ENCODE measurements at regions of chr20 and their contacts with region 1.

Region 1: GRCh38 chr20:17504898-17505635 is 26.1 kb downstream of the BFSP1 start:
- DNase-seq: peak; percentile 57 to 74 (median 69)
- H3K4me3 ChIP-seq: peak overlapping the region; percentile 55 to 63
- H3K4me3 Mint-ChIP-seq: peak overlapping the region; percentile 89 to 97 (median 92)
- H3K27ac ChIP-seq: peak overlapping the region; percentile 54
- H3K27ac Mint-ChIP-seq: peak overlapping the region; percentile 89 to 95 (median 92)
- H3K4me1 ChIP-seq: peaks cover 46% of the 10 kb centered on the region
- H3K4me1 Mint-ChIP-seq: peaks cover 25 to 54% (median 39%) of the 10 kb centered on the region in 4 donors
- H3K27me3 ChIP-seq: no peaks in the 10 kb centered on the region
- H3K27me3 Mint-ChIP-seq: no peaks in the 10 kb centered on the region

Region 2: DNA sequence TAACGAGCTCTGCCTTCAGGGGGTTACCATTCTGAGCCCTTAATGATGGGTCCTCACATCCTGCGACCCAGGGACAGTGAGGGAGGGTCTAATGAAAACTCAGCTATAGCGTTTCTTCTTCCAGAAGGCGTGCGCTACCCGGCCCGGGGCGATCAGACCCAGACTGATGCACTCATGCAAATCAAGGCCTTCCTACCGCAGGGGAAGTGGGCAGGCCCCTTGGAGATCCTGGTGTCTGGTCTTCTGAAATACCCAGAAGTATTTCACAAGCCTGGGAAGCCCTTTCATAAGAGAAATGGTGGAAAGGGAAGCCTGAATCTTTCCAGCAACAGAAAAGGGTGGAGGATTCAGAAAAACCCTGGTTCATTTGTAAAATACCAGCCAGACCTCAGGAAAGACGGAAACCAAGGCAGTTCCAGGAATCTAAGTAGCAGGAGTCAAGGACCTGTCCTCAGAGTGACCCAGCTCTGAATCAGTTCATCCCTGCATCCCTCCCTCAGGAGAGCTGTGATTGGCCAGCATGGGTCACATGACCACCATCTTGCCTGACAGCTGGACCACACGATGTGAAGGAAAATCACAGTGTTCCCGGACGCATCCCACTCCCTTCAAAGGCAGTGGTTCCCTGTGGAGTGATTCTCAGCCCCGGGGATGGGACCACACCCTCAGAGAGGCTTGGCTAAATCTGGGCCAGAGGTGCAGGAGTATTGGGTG is 13.4 kb after region 1 on chr20:
- CTCF ChIA-PET with region 1: interaction called, 21 read pairs
- POLR2A ChIA-PET with region 1: no interaction called
- intact Hi-C with region 1: no loop called
- DNase-seq: no peak
- H3K4me3 ChIP-seq: no peak overlapping the region
- H3K4me3 Mint-ChIP-seq: no peak overlapping the region
- H3K27ac ChIP-seq: no peak overlapping the region
- H3K27ac Mint-ChIP-seq: no peak overlapping the region
- H3K4me1 ChIP-seq: no peaks in the 10 kb centered on the region
- H3K4me1 Mint-ChIP-seq: peaks cover 3 to 10% (median 6%) of the 10 kb centered on the region in 4 donors
- H3K27me3 ChIP-seq: no peaks in the 10 kb centered on the region
- H3K27me3 Mint-ChIP-seq: no peaks in the 10 kb centered on the region

Region 3: GRCh38 chr20:17569616-17570346 is 64.7 kb after region 1 on chr20 and contains the start of gene DSTN:
- CTCF ChIA-PET with region 1: interaction called, 5 read pairs
- POLR2A ChIA-PET with region 1: interaction called, 20 read pairs
- intact Hi-C with region 1: loop called (anchors 2 kb)
- DNase-seq: peak; percentile 87 to 91 (median 90)
- H3K4me3 ChIP-seq: peak within 1 kb of the TSS; percentile 73 to 84
- H3K4me3 Mint-ChIP-seq: peak within 1 kb of the TSS; percentile 94 to 97 (median 96)
- H3K27ac ChIP-seq: peak within 1 kb of the TSS; percentile 83
- H3K27ac Mint-ChIP-seq: peak within 1 kb of the TSS; percentile 70 to 97 (median 96)
- H3K4me1 ChIP-seq: peaks cover 35% of the 10 kb centered on the region
- H3K4me1 Mint-ChIP-seq: peaks cover 23 to 37% (median 28%) of the 10 kb centered on the region in 4 donors
- H3K27me3 ChIP-seq: no peaks in the 10 kb centered on the region
- H3K27me3 Mint-ChIP-seq: no peaks in the 10 kb centered on the region
- total RNA-seq, gene DSTN: 43.1 to 49.1 TPM

Region 4: DNA sequence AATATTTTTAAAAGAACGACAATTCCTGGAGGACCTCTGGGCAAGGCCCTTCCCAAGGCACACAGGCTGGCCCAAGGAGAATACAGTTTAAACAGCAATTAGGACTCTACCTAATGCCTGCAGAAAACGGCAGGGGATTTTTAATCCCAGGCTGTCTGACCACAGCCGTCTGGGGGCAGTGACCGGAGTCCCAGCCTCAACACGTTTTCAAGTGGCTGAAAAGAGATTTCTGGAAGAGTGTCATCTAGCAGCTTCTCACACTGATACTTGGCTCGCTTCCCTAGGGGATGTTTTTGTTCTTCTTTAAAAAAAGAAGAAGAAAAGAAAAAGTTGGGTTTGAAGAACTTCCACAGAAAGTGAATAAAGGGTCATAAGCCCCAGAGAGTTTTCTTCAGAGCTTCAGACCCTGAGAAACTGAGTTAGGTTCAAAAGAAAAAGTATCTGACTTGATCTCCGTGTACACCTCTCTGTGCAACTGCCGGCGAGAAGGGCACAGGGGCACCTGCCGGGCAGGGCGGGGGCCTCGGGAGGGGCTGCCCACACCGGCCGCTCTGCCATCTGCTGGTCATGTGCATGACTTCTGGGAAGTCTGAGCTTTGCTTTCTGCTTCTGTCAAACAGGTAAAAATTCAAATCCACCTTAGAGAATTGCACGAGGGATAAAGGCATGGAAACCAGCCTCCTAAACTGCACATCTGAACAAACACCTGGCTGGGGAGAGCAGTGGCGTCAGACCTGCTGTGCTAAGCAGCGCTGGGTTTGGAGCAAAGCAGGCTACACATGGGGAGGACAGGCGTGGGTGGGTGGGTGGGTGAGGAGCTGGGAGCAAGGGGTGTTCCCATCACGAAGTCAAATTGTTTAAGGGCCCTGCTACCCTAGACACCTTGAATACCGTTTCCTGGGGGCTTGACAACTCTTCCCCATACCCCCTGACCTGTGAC is 144.0 kb after region 1 on chr20:
- CTCF ChIA-PET with region 1: interaction called, 22 read pairs
- POLR2A ChIA-PET with region 1: no interaction called
- intact Hi-C with region 1: no loop called
- DNase-seq: peak in 4 of 5 donors; percentile 17 to 24 (median 20)
- H3K4me3 ChIP-seq: no peak overlapping the region
- H3K4me3 Mint-ChIP-seq: no peak overlapping the region
- H3K27ac ChIP-seq: no peak overlapping the region
- H3K27ac Mint-ChIP-seq: peak overlapping the region in 4 of 7 donors; percentile 25 to 84 (median 62)
- H3K4me1 ChIP-seq: no peaks in the 10 kb centered on the region
- H3K4me1 Mint-ChIP-seq: peaks cover 2 to 8% (median 4%) of the 10 kb centered on the region in 4 donors
- H3K27me3 ChIP-seq: no peaks in the 10 kb centered on the region
- H3K27me3 Mint-ChIP-seq: no peaks in the 10 kb centered on the region

Region 5: GRCh38 chr20:17904027-17904426 is 399.0 kb after region 1 on chr20:
- CTCF ChIA-PET with region 1: interaction called, 141 read pairs
- POLR2A ChIA-PET with region 1: interaction called, 10 read pairs
- intact Hi-C with region 1: no loop called
- DNase-seq: peak in 1 of 5 donors; percentile 14
- H3K4me3 ChIP-seq: no peak overlapping the region
- H3K4me3 Mint-ChIP-seq: peak overlapping the region in 1 of 8 donors; percentile 63
- H3K27ac ChIP-seq: no peak overlapping the region
- H3K27ac Mint-ChIP-seq: peak overlapping the region in 1 of 7 donors; percentile 19
- H3K4me1 ChIP-seq: no peaks in the 10 kb centered on the region
- H3K4me1 Mint-ChIP-seq: peaks cover 0 to 3% (median 0%) of the 10 kb centered on the region in 4 donors
- H3K27me3 ChIP-seq: no peaks in the 10 kb centered on the region
- H3K27me3 Mint-ChIP-seq: peaks cover 3 to 12% of the 10 kb centered on the region in 2 donors

Region 6: DNA sequence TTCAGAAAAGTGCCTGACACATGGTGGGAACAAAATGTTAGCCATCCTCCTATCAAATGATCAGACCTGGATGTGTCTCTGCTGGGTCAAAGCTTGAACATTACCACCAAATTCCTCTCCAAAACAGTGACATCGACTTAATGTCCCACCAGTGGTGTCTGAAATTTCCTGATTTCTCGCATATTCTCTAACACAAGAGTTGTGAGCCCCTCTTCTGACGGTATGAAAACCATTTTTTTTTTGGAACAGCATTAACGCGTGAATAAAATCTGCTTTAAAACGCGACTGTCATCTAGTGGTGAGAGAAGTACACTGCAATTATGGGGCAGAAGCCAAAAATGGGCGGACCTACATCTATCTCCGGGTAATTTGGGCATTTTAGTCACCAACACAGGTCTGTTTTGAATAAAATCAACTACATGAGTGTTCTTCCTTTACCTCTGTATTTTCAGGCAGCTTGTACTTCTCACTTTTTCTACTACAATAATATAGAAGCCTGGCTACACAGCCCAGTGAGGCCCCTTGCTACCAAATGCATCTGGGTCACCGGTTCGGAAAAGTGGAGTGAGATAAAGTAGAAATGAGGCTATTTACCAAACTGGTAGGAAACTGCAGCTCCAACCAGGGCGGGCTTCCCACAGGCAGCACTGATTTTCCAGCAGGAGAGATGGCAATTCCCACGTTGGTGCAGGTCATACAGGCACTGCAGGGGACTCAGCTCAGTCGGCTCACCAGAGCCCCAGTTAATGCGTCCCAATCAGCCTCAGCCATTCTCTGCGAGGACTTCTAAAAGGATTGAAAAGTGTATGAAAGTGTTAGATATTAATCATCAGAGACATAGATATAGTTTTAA is 491.1 kb after region 1 on chr20:
- CTCF ChIA-PET with region 1: interaction called, 19 read pairs
- POLR2A ChIA-PET with region 1: interaction called, 3 read pairs
- intact Hi-C with region 1: loop called (anchors 1 kb)
- DNase-seq: peak; percentile 55 to 68 (median 64)
- H3K4me3 ChIP-seq: no peak overlapping the region
- H3K4me3 Mint-ChIP-seq: peak overlapping the region in 1 of 8 donors; percentile 29
- H3K27ac ChIP-seq: no peak overlapping the region
- H3K27ac Mint-ChIP-seq: peak overlapping the region in 1 of 7 donors; percentile 6
- H3K4me1 ChIP-seq: peaks cover 18% of the 10 kb centered on the region
- H3K4me1 Mint-ChIP-seq: peaks cover 13 to 27% (median 19%) of the 10 kb centered on the region in 4 donors
- H3K27me3 ChIP-seq: no peaks in the 10 kb centered on the region
- H3K27me3 Mint-ChIP-seq: peaks cover 0 to 3% of the 10 kb centered on the region in 2 donors